ENCODE measurements at regions of chr1 and their contacts with region 1.

Region 1: DNA sequence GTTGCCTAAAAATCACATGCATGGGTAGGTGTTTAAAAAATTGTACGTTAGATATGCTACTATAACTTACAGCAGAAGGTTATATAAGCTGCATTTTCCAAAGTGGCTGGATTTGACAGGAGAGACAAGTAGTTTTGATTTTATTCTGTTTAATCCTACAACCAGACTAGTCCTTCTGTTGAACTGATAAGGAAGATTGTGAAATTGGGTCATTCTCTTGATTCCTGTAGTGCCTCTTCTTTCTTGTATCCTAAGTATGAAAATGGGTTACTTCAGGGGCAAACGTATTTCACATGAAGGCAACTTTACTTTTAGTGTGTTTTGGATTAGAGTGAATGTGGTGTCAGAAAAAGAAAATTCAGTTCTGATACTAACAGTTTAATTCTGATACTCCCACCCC is 19.0 kb downstream of the CDC42 start:
- DNase-seq: no peak
- ATAC-seq: no peak
- H3K4me3 ChIP-seq: no peak overlapping the region
- H3K4me3 Mint-ChIP-seq: peak overlapping the region in 2 of 3 donors; percentile 43 to 62
- H3K27ac ChIP-seq: no peak overlapping the region
- H3K27ac Mint-ChIP-seq: peak overlapping the region; percentile 27 to 58
- H3K4me1 ChIP-seq: peaks cover 42 to 75% of the 10 kb centered on the region in 2 experiments
- H3K4me1 Mint-ChIP-seq: peaks cover 87 to 89% (median 88%) of the 10 kb centered on the region in 3 donors
- H3K27me3 ChIP-seq: no peaks in the 10 kb centered on the region
- H3K27me3 Mint-ChIP-seq: no peaks in the 10 kb centered on the region

Region 2: GRCh38 chr1:21742578-21742977 is 328.9 kb before region 1 on chr1:
- CTCF ChIA-PET with region 1: no interaction called
- POLR2A ChIA-PET with region 1: interaction called in 1 of 2 experiments, 11 read pairs
- DNase-seq: no peak
- ATAC-seq: peak in 1 of 4 experiments; percentile 39
- H3K4me3 ChIP-seq: no peak overlapping the region
- H3K4me3 Mint-ChIP-seq: no peak overlapping the region
- H3K27ac ChIP-seq: no peak overlapping the region
- H3K27ac Mint-ChIP-seq: no peak overlapping the region
- H3K4me1 ChIP-seq: peaks cover 0 to 4% of the 10 kb centered on the region in 2 experiments
- H3K4me1 Mint-ChIP-seq: peaks cover 11 to 26% (median 15%) of the 10 kb centered on the region in 3 donors
- H3K27me3 ChIP-seq: no peaks in the 10 kb centered on the region
- H3K27me3 Mint-ChIP-seq: no peaks in the 10 kb centered on the region

Region 3: DNA sequence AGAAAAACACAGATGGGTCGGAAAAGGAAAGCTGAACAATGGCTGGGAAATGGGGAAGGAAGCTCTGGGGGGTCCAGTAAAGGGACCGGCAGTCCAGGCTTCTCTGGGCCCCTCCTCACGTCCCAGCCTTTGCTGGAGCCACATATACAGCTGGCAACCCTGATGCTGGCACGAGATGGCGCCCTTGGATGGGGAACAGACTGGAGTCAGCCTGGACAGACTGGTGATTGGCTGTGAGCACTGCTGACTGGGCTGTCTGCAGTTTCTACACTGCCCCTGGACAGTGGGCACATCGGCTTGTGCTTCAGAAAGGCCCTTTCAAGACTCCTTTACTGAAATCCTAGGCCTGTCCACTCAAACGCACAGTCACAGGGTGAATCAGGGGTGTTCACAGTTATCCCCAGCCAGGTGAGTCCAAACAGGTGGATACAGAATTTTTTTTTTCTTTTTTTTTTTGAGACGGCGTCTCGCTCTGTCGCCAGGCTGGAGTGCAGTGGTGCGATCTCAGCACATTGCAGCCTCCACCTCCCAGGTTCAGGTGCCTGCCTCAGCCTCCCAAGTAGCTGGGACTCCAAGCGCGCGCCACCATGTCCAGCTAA is 349.0 kb after region 1 on chr1:
- CTCF ChIA-PET with region 1: no interaction called
- POLR2A ChIA-PET with region 1: no interaction called
- DNase-seq: peak in 32 of 35 experiments; percentile 13 to 59 (median 34)
- ATAC-seq: peak in 3 of 4 experiments; percentile 43 to 72 (median 63)
- H3K4me3 ChIP-seq: no peak overlapping the region
- H3K4me3 Mint-ChIP-seq: no peak overlapping the region
- H3K27ac ChIP-seq: no peak overlapping the region
- H3K27ac Mint-ChIP-seq: no peak overlapping the region
- H3K4me1 ChIP-seq: peaks cover 0 to 5% of the 10 kb centered on the region in 2 experiments
- H3K4me1 Mint-ChIP-seq: peaks cover 2 to 11% (median 3%) of the 10 kb centered on the region in 3 donors
- H3K27me3 ChIP-seq: peaks cover 3 to 47% of the 10 kb centered on the region in 2 experiments
- H3K27me3 Mint-ChIP-seq: peaks cover 35 to 48% of the 10 kb centered on the region in 2 donors

Measured in T-cell (primary cell).